Mammary epithelial cell (primary cell): ENCODE measurements at regions of chr18 and their contacts with region 1.

Region 1: GRCh38 chr18:23703057-23703986 is 14.1 kb downstream of the LAMA3 start:
- DNase-seq: peak; percentile 63
- H3K4me3 ChIP-seq: no peak overlapping the region
- H3K27ac ChIP-seq: no peak overlapping the region
- H3K4me1 ChIP-seq: no peaks in the 10 kb centered on the region
- H3K27me3 ChIP-seq: no peaks in the 10 kb centered on the region
- CTCF ChIP-seq: peak; percentile 54 to 72

Region 2: DNA sequence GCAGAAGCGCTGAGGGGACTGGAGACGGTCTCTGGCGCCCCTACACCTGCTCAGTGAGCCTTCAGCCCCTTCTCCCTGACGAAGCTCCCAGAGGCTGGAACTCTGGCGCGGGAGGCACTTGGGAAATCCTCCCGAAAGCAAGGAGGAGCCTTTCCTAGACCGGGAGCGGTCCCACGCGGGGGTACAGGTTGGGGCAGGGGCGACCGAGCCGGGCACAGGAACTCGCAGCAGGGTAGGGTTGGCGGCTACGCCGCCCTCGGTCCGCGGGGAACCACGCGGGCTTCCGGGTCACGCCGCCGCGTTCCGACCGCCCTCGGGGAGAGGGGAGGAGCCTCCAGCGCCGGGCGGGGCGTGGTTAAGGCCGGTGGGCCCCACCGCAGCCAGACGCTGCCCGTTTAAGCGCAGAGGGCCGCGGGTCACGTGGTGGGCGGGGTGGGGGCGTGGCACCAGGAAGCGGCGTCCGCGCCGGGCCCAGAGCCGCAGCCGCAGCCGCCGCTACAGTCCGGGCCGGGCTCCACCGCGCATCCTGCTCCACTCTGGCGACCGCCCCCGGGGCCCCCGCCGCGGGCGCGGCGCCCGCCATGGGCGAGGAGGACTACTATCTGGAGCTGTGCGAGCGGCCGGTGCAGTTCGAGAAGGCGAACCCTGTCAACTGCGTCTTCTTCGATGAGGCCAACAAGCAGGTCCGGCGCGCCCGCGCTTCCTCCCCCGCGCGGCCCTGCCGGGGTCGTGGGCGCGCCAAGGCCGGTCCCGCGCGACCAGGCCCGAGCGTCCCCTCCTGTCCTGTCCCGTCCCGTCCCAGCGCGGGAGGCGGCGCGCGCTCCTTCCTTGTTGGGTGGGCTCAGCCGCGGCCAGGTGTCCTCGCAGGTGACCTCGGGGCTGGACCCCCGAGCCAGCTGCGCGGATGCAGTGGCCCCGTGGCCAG is 200.0 kb before region 1 on chr18 and contains the start of gene RMC1:
- CTCF ChIA-PET with region 1: no interaction called
- dilution Hi-C with region 1: no loop called
- in situ Hi-C with region 1: no loop called
- intact Hi-C with region 1: loop called (anchors 1 kb)
- DNase-seq: peak; percentile 90
- H3K4me3 ChIP-seq: peak within 1 kb of the TSS; percentile 75 to 87 (median 83)
- H3K27ac ChIP-seq: peak within 1 kb of the TSS; percentile 67
- H3K4me1 ChIP-seq: peaks cover 15% of the 10 kb centered on the region
- H3K27me3 ChIP-seq: no peaks in the 10 kb centered on the region
- CTCF ChIP-seq: peak in 1 of 2 donors; percentile 21
- total RNA-seq, gene RMC1: 29.8 to 33.3 TPM

Region 3: DNA sequence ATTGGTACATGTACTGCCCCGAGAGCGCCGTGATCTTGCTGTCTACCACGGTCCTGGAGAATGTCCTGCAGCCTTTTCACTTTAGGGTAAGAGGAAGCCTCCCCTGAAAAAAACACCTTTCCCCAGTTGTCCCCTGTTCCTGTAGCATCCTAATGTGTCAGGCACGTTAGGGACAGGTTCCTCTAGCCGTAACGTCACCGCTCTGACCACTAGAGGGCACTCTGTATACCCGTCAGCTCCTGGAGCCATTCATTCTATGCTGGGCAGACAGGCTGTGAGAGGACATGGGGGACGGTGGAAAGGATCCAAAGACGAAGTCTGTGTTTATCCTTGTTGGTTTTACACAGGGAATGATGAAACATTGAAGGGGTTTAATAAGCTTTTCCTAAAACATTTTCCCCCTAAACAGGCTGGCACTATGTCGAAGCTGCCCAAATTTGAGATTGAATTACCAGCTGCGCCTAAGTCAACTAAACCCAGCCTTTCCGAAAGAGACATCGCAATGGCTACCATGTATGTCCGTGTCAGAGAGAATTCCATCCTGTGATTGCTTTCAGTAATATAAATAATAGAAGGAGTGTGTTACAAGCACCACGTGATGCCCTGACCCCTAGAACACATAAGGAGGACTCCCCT is 187.3 kb before region 1 on chr18:
- CTCF ChIA-PET with region 1: interaction called, 4 read pairs
- dilution Hi-C with region 1: no loop called
- in situ Hi-C with region 1: loop called in 1 of 2 experiments (anchors 10 kb)
- intact Hi-C with region 1: loop called (anchors 1 kb)
- DNase-seq: peak; percentile 62
- H3K4me3 ChIP-seq: no peak overlapping the region
- H3K27ac ChIP-seq: no peak overlapping the region
- H3K4me1 ChIP-seq: peaks cover 15% of the 10 kb centered on the region
- H3K27me3 ChIP-seq: no peaks in the 10 kb centered on the region
- CTCF ChIP-seq: peak; percentile 90 to 97

Region 4: DNA sequence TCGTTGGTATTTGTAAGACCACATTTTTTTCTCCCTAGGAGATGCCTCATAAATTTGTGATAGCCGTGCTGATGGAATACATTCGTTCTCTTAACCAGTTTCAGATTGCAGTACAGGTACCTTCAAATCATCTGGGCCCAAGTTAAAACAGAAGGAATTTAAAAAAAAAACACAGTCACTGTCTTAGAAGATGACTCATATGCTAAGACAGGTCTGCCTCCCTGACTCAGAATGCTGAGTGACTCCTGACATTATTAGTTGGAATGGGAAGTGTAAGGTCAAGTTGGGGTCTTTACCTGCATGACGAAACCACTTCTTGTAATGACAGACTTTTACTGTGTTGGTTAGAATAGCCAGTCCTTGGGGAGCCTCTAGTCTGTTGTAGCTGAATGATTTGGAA is 173.7 kb before region 1 on chr18:
- CTCF ChIA-PET with region 1: no interaction called
- dilution Hi-C with region 1: no loop called
- in situ Hi-C with region 1: loop called in 1 of 2 experiments (anchors 10 kb)
- intact Hi-C with region 1: no loop called
- DNase-seq: peak; percentile 91
- H3K4me3 ChIP-seq: no peak overlapping the region
- H3K27ac ChIP-seq: no peak overlapping the region
- H3K4me1 ChIP-seq: peaks cover 24% of the 10 kb centered on the region
- H3K27me3 ChIP-seq: no peaks in the 10 kb centered on the region
- CTCF ChIP-seq: no peak

Region 5: DNA sequence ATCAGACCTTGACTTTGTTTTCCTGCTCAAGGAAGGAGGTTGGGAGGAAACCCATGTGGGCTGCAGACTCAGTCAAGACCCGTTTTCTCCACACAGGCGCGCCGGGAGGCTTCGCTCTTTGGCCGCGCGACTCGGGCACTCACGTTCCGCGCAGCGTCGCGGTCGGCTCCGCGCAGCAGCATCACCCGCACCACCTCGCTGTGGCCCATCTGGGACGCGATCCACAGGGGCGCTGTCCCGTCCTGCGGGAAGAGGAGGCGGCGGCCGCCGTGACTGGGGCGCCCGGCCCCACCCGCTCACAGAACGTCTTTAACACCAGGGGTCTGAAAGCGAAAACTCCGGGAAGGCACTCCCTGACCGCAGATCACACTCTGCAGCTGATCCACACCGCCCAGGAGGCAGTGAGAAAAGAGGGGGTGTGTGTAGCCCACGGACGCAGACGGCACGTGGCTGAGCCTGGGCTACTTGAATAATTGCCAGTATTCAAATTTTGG is 83.9 kb before region 1 on chr18:
- CTCF ChIA-PET with region 1: interaction called, 7 read pairs
- dilution Hi-C with region 1: no loop called
- in situ Hi-C with region 1: loop called (anchors 5 to 10 kb)
- intact Hi-C with region 1: loop called (anchors 1 kb)
- DNase-seq: no peak
- H3K4me3 ChIP-seq: peak overlapping the region in 2 of 3 experiments; percentile 33 to 34
- H3K27ac ChIP-seq: no peak overlapping the region
- H3K4me1 ChIP-seq: peaks cover 8% of the 10 kb centered on the region
- H3K27me3 ChIP-seq: peaks cover 5% of the 10 kb centered on the region
- CTCF ChIP-seq: no peak

Region 6: DNA sequence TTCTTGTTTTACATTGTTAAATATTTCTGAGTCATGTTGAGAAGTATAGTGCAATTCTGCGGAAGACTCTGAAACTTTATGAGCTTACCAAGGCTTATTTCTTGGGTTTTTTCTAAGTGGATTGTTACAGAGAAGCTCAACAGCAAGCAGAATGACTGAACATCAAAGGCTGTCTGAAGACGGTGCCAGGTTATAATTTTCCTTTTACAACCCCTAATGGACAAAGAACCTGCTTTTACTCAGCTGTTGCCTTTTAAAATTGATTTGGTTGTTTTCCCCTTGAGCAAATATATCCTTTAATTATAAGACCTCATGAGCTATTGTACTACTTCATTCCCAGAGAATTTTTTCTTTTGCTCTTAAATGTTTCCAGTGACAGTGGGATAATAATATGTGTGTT is 27.5 kb after region 1 on chr18:
- CTCF ChIA-PET with region 1: interaction called, 13 read pairs
- dilution Hi-C with region 1: no loop called
- in situ Hi-C with region 1: no loop called
- intact Hi-C with region 1: no loop called
- DNase-seq: no peak
- H3K4me3 ChIP-seq: no peak overlapping the region
- H3K27ac ChIP-seq: no peak overlapping the region
- H3K4me1 ChIP-seq: peaks cover 5% of the 10 kb centered on the region
- H3K27me3 ChIP-seq: no peaks in the 10 kb centered on the region
- CTCF ChIP-seq: no peak

Region 7: GRCh38 chr18:23798249-23798648 is 94.9 kb after region 1 on chr18:
- CTCF ChIA-PET with region 1: no interaction called
- dilution Hi-C with region 1: loop called (anchors 5 kb)
- in situ Hi-C with region 1: no loop called
- intact Hi-C with region 1: no loop called
- DNase-seq: no peak
- H3K4me3 ChIP-seq: no peak overlapping the region
- H3K27ac ChIP-seq: no peak overlapping the region
- H3K4me1 ChIP-seq: no peaks in the 10 kb centered on the region
- H3K27me3 ChIP-seq: no peaks in the 10 kb centered on the region
- CTCF ChIP-seq: no peak